ENCODE measurements at regions of chr12 and their contacts with region 1.

Region 1: GRCh38 chr12:20950248-20950647 is 139.7 kb downstream of the SLCO1B3 start:
- DNase-seq: no peak
- H3K4me3 ChIP-seq: no peak overlapping the region
- H3K27ac ChIP-seq: no peak overlapping the region
- H3K4me1 ChIP-seq: no peaks in the 10 kb centered on the region
- H3K27me3 ChIP-seq: no peaks in the 10 kb centered on the region
- CTCF ChIP-seq: no peak
- EP300 ChIP-seq: no peak
- POLR2A ChIP-seq: no peak

Region 2: DNA sequence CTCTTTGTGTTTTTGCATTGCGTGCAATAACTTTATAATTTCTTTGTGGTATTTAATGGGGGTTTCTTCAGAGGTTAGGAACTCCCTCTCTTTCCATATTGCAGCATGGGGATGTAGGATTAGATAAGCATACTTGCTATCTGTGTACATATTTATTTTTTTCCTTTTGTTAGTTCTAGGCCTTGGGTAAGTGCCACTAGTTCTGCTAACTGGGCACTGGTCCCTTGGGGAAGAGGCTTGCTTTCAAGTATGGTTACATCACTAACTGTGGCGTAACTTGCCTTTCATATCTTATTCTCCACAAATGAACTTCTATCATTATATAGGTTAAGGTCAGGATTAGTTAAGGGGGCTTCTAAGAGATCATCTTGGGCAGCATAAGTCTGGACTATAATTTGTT is 171.3 kb before region 1 on chr12:
- intact Hi-C with region 1: loop called in 1 of 4 experiments (anchors 5 kb)
- DNase-seq: no peak
- H3K4me3 ChIP-seq: no peak overlapping the region
- H3K27ac ChIP-seq: no peak overlapping the region
- H3K4me1 ChIP-seq: no peaks in the 10 kb centered on the region
- H3K27me3 ChIP-seq: no peaks in the 10 kb centered on the region
- CTCF ChIP-seq: no peak
- EP300 ChIP-seq: no peak
- POLR2A ChIP-seq: no peak

Region 3: GRCh38 chr12:20852649-20853048 is 97.6 kb before region 1 on chr12:
- intact Hi-C with region 1: no loop called
- DNase-seq: no peak
- H3K4me3 ChIP-seq: no peak overlapping the region
- H3K27ac ChIP-seq: no peak overlapping the region
- H3K4me1 ChIP-seq: no peaks in the 10 kb centered on the region
- H3K27me3 ChIP-seq: no peaks in the 10 kb centered on the region
- CTCF ChIP-seq: no peak
- EP300 ChIP-seq: no peak
- POLR2A ChIP-seq: no peak

Region 4: DNA sequence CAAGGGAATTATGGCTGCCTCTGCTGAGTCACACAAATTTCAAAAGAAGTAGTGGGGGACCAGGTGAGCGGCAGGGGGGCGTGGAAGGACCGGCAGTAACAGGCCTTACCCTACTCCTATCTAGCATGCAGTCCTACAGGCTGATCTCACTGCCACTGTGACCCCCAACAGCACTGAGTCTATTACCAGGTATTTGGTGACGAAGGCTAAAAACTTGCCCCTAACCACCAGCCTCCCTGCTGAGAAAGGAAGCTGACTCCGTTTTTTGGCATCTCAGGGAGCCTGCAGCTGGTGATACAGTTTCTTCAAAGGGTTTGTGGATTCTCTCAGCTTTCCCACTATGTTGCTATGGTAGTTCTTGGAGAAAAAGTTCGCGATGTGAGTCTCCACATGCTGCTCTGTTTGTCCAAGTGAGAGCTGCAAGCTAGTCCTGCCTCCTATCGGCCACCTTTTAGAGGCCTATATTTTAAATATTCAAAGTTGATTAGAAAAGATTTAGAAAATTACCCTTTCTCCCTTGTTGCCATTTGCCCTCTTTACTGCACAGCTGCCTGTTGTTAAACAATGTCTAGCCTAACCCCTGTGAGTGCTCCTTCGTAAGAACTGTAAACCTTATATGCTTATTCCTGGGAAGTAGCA is 123.7 kb after region 1 on chr12:
- intact Hi-C with region 1: no loop called
- DNase-seq: no peak
- H3K4me3 ChIP-seq: no peak overlapping the region
- H3K27ac ChIP-seq: no peak overlapping the region
- H3K4me1 ChIP-seq: no peaks in the 10 kb centered on the region
- H3K27me3 ChIP-seq: no peaks in the 10 kb centered on the region
- CTCF ChIP-seq: no peak
- EP300 ChIP-seq: no peak
- POLR2A ChIP-seq: no peak